HEK293 (cell line): ENCODE measurements at regions of chr6 and their contacts with region 1.

Region 1: DNA sequence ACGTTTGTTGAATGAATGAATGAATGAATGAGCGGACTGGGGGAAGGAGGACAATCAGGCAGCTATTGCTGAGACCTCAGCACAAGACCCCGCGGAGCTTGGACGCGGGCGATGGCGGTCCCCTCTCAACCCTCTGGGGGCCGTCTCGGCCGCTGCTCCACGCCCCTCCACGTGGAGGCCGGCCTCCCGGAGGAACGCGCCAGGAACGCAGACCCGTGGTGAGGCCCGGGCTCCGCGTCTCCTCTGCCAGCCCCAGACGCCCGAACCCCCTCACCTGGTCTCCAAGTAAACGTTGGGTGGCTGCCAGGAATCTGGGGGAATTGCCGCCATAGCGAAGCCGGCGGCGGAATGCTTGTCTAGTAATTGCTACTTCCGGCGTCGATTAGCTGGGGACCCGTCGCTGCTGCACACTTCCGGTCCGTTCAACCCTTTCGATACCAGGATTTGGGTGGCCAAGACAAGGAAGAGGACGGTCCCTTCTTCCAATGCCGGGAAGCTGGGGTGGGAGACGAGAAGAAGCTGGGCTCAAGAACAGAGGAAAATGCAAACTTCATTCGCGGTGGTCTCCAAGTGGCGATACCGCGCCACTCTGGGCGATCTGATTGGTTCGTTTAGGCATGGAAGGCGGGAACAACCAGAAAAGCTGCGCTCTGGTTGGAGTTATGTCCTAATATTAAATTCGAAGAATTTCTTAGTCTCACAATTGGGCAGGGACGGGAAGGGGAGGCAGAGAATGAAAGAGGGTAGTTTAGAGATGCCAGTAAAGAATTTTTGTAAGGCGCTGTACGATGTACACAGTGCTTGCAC is at the start of gene PPIL1:
- H3K4me3 ChIP-seq: peak within 1 kb of the TSS; percentile 86
- H3K27ac ChIP-seq: peak within 1 kb of the TSS; percentile 99
- H3K4me1 ChIP-seq: no peaks in the 10 kb centered on the region
- CTCF ChIP-seq: peak; percentile 74

Region 2: GRCh38 chr6:36526066-36526465 is 348.6 kb before region 1 on chr6:
- CTCF ChIA-PET with region 1: no interaction called
- POLR2A ChIA-PET with region 1: no interaction called
- H3K4me3 ChIP-seq: no peak overlapping the region
- H3K27ac ChIP-seq: no peak overlapping the region
- H3K4me1 ChIP-seq: no peaks in the 10 kb centered on the region
- CTCF ChIP-seq: no peak

Region 3: DNA sequence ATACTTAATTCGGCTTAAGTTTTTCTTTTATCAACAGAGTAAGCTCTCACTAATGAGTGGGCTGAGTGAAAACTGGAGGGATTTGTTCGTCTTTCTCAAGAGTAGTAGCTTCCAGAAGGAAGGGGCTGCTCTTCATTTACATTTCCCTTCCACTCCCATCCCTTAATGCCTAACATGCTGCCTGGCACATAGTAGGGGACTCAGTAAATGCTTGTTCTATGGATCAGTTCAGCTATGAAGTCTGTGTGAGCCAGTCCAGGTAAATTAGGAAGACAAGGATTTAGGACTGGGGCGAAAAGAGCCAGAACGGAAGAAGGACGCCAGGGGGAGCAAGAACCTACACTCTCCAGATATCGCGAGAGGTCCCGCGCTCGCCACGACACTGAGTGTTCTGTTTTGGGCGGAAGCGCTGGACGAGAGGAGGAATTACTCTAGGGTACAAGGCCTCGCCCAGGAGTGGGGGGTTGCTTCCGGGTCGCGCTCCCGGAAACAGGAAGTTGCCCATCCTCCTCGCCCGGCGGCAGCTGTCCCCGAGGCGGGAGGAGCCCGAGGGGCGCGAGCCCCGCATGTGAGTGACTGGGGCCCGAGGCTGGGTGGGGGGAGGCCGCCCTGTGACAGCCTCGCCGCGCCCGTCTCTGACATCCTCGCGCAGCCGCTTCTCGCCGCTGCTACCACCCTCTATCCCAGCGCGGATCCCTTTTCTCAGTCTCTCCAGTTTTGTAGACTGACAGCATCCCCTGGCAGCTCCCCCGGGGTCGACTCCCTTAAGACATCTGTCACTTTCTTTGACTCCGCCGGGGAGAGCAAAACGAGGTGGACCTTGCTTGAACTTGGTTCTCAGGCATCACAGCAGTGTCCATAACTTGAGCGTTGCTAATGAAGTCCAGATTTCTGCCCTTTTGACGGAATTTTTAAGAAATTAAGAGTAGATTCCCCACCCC is 11.1 kb after region 1 on chr6 and contains the start of gene C6orf89:
- CTCF ChIA-PET with region 1: interaction called, 67 read pairs
- POLR2A ChIA-PET with region 1: interaction called, 35 read pairs
- H3K4me3 ChIP-seq: peak within 1 kb of the TSS; percentile 81
- H3K27ac ChIP-seq: peak within 1 kb of the TSS; percentile 66
- H3K4me1 ChIP-seq: peaks cover 3% of the 10 kb centered on the region; the same call in 1 of the 2 replicates
- CTCF ChIP-seq: peak; percentile 92